CD8-positive, alpha-beta T cell (primary cell): ENCODE measurements at regions of chr2 and their contacts with region 1.

Region 1: DNA sequence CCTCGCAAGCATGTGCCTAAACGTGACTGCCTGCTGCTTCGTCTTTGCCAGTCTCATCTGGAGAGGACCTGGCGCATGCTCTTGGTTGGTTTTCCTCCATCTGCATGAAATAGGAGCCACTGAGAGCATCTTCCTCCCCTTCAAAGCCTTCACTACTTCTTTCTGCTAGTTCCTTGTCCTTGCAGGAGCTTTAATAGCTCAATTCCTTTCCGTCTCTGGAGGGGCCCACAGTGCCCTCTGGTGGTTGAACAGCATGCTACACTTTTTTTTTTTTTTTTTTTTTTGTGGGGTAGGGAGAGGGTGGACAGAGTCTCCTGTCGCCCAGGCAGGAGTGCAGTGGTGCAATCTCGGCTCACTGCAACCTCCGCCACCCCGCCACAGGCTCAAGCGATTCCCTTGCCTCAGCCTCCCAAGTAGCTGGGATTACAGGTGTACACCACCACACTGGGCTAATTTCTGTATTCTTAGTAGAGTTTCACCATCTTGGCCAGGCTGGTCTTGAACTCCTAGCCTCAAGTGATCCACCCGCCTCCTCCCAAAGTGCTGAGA is 59.6 kb downstream of the SP110 start:
- DNase-seq: peak in 8 of 9 experiments; percentile 27 to 68 (median 55)
- ATAC-seq: peak; percentile 61
- H3K4me3 ChIP-seq: no peak overlapping the region
- H3K4me3 Mint-ChIP-seq: no peak overlapping the region
- H3K27ac ChIP-seq: no peak overlapping the region
- H3K27ac Mint-ChIP-seq: no peak overlapping the region
- H3K4me1 ChIP-seq: no peaks in the 10 kb centered on the region
- H3K4me1 Mint-ChIP-seq: peaks cover 2% of the 10 kb centered on the region
- H3K27me3 ChIP-seq: no peaks in the 10 kb centered on the region
- H3K27me3 Mint-ChIP-seq: no peaks in the 10 kb centered on the region
- CTCF ChIP-seq: peak; percentile 88

Region 2: DNA sequence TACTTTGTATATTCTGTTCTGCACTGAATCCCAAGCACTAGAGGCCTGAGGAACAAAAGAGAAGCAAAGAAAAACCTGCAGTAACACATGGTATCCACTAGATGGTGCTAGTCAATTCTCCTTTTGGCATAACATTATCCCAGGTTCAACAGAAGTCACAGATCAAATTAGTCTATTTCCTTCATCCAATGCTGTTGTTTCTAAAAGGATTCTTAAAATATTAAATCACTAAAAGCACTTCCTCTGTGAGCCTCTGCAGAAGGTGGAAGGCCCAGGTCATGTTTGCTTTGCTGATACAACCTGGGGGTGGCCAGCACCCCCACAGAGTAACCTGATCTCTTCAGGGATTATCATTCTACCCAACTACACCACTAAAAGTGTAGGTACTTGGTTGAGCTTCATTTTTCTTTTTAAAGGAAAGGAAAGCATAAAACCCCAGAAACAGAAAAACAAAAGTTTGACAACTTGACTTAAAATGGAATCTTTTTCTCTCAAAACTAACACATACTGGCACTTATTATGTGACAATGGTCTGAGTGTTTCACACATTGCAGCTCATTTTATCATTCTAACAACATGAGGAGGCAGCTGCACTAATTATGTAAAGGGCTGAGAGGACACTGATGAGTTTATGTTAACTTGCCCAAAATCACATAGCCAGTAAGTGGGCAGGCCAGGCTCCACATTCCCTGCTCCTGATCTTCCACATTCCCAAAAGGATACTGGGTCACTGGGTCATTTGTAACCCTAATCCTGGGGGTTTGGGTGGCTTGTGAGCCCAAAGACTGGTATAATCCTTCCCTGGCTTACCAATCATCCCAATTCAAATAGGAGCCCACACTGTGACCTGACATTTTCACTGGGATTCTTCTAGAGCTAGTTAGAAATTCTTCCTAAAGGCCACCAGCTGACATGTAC is 379.1 kb before region 1 on chr2:
- CTCF ChIA-PET with region 1: interaction called, 5 read pairs
- POLR2A ChIA-PET with region 1: no interaction called
- intact Hi-C with region 1: loop called (anchors 2 kb)
- DNase-seq: peak in 2 of 9 experiments; percentile 41 to 61
- ATAC-seq: peak; percentile 84
- H3K4me3 ChIP-seq: no peak overlapping the region
- H3K4me3 Mint-ChIP-seq: no peak overlapping the region
- H3K27ac ChIP-seq: no peak overlapping the region
- H3K27ac Mint-ChIP-seq: peak overlapping the region; percentile 28
- H3K4me1 ChIP-seq: peaks cover 4% of the 10 kb centered on the region
- H3K4me1 Mint-ChIP-seq: peaks cover 27% of the 10 kb centered on the region
- H3K27me3 ChIP-seq: no peaks in the 10 kb centered on the region
- H3K27me3 Mint-ChIP-seq: no peaks in the 10 kb centered on the region
- CTCF ChIP-seq: peak; percentile 98

Region 3: GRCh38 chr2:230007931-230008707 is 152.1 kb before region 1 on chr2:
- CTCF ChIA-PET with region 1: interaction called, 12 read pairs
- POLR2A ChIA-PET with region 1: no interaction called
- intact Hi-C with region 1: loop called in 1 of 2 experiments (anchors 1 kb)
- DNase-seq: peak; percentile 56 to 87 (median 73)
- ATAC-seq: peak; percentile 48
- H3K4me3 ChIP-seq: no peak overlapping the region
- H3K4me3 Mint-ChIP-seq: no peak overlapping the region
- H3K27ac ChIP-seq: no peak overlapping the region
- H3K27ac Mint-ChIP-seq: no peak overlapping the region
- H3K4me1 ChIP-seq: no peaks in the 10 kb centered on the region
- H3K4me1 Mint-ChIP-seq: peaks cover 3% of the 10 kb centered on the region
- H3K27me3 ChIP-seq: no peaks in the 10 kb centered on the region
- H3K27me3 Mint-ChIP-seq: no peaks in the 10 kb centered on the region
- CTCF ChIP-seq: peak; percentile 83

Region 4: DNA sequence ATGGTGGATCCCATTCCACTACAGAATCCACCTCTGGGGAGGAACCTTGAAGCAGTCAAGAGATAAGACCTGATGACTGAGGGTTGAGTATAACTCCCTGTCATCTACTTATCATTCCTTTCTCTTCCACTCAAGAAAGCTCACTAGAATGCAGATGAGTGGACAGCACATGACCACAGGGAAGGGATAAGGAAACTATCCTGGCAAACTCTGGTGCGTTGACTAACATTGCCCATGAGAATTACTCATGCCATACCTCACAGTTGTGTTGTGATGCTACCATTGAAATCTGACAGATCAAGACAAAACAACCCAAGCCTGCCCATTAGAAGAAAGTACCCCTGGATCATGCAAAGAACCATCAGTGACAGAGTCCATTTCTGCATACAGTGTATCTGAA is 118.0 kb before region 1 on chr2:
- CTCF ChIA-PET with region 1: no interaction called
- POLR2A ChIA-PET with region 1: no interaction called
- intact Hi-C with region 1: no loop called
- DNase-seq: no peak
- ATAC-seq: no peak
- H3K4me3 ChIP-seq: no peak overlapping the region
- H3K4me3 Mint-ChIP-seq: no peak overlapping the region
- H3K27ac ChIP-seq: no peak overlapping the region
- H3K27ac Mint-ChIP-seq: no peak overlapping the region
- H3K4me1 ChIP-seq: no peaks in the 10 kb centered on the region
- H3K4me1 Mint-ChIP-seq: no peaks in the 10 kb centered on the region
- H3K27me3 ChIP-seq: no peaks in the 10 kb centered on the region
- H3K27me3 Mint-ChIP-seq: no peaks in the 10 kb centered on the region
- CTCF ChIP-seq: no peak

Region 5: DNA sequence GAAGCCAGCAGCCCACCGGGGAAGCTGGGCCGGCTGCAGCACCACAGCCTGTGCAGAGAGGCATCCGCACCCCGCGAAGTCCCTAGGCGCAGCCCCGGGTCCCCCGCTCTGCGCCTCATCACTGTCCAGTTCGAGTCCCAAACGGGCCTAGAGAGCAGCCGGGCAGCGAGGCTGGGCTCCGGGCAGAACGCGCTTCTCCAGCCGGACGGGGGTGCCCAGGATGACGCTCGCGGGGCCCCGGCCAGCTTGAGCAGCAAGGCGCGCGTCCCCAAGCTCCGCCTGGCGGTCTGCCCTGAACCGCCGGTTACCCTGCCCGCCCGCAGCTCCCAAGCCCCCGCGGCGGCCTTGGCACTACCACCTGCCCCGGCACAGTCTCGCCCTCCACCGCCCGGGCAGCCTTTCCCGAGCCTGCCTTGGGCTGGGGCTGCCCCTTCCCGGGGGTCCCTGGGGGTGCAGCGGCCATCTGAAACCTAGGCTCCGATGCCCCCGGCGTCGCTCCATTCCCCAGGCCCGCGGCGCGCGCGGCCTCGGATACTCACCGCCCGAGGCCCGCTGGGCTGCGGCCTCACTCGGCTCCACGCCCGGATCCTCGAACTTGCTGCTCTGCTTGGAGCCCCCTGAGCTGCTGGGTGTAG is 92.1 kb before region 1 on chr2:
- CTCF ChIA-PET with region 1: interaction called, 3 read pairs
- POLR2A ChIA-PET with region 1: no interaction called
- intact Hi-C with region 1: loop called (anchors 1 kb)
- DNase-seq: peak; percentile 7 to 69 (median 39)
- ATAC-seq: peak; percentile 24
- H3K4me3 ChIP-seq: peak overlapping the region; percentile 50 to 63
- H3K4me3 Mint-ChIP-seq: peak overlapping the region; percentile 80
- H3K27ac ChIP-seq: no peak overlapping the region
- H3K27ac Mint-ChIP-seq: no peak overlapping the region
- H3K4me1 ChIP-seq: no peaks in the 10 kb centered on the region
- H3K4me1 Mint-ChIP-seq: peaks cover 15% of the 10 kb centered on the region
- H3K27me3 ChIP-seq: no peaks in the 10 kb centered on the region
- H3K27me3 Mint-ChIP-seq: peaks cover 27% of the 10 kb centered on the region
- CTCF ChIP-seq: peak; percentile 8

Region 6: DNA sequence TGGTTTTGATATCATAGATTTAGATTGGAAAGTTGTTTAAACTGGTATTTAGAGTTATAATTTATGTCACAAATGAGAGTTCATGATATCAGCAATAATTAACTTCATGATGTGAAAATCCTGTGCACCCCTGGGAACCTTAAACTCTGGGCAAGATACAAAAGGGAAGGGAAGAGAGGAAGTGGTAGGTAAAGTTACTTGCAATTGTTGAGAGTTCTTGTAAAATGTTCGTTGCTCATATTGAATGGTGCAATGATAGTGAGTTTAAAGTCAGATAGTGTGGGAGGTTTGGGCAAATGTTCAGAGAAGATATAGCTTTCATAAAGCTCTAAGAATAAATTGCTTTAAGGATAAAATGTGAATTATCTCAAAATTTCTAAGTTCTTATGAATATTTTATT is 15.8 kb before region 1 on chr2:
- CTCF ChIA-PET with region 1: interaction called, 10 read pairs
- POLR2A ChIA-PET with region 1: no interaction called
- intact Hi-C with region 1: no loop called
- DNase-seq: no peak
- ATAC-seq: no peak
- H3K4me3 ChIP-seq: no peak overlapping the region
- H3K4me3 Mint-ChIP-seq: no peak overlapping the region
- H3K27ac ChIP-seq: no peak overlapping the region
- H3K27ac Mint-ChIP-seq: no peak overlapping the region
- H3K4me1 ChIP-seq: no peaks in the 10 kb centered on the region
- H3K4me1 Mint-ChIP-seq: no peaks in the 10 kb centered on the region
- H3K27me3 ChIP-seq: no peaks in the 10 kb centered on the region
- H3K27me3 Mint-ChIP-seq: no peaks in the 10 kb centered on the region
- CTCF ChIP-seq: no peak

Region 7: GRCh38 chr2:230170532-230170931 is 10.3 kb after region 1 on chr2:
- CTCF ChIA-PET with region 1: interaction called, 14 read pairs
- POLR2A ChIA-PET with region 1: interaction called, 3 read pairs
- intact Hi-C with region 1: no loop called
- DNase-seq: peak in 2 of 9 experiments; percentile 26 to 47
- ATAC-seq: peak; percentile 54
- H3K4me3 ChIP-seq: no peak overlapping the region
- H3K4me3 Mint-ChIP-seq: peak overlapping the region; percentile 42
- H3K27ac ChIP-seq: peak overlapping the region in 1 of 2 experiments; percentile 44
- H3K27ac Mint-ChIP-seq: peak overlapping the region; percentile 87
- H3K4me1 ChIP-seq: peaks cover 8% of the 10 kb centered on the region
- H3K4me1 Mint-ChIP-seq: peaks cover 11% of the 10 kb centered on the region
- H3K27me3 ChIP-seq: no peaks in the 10 kb centered on the region
- H3K27me3 Mint-ChIP-seq: no peaks in the 10 kb centered on the region
- CTCF ChIP-seq: no peak

Region 8: GRCh38 chr2:230209422-230210051 is 49.4 kb after region 1 on chr2:
- CTCF ChIA-PET with region 1: no interaction called
- POLR2A ChIA-PET with region 1: no interaction called
- intact Hi-C with region 1: no loop called
- DNase-seq: no peak
- ATAC-seq: no peak
- H3K4me3 ChIP-seq: no peak overlapping the region
- H3K4me3 Mint-ChIP-seq: no peak overlapping the region
- H3K27ac ChIP-seq: no peak overlapping the region
- H3K27ac Mint-ChIP-seq: no peak overlapping the region
- H3K4me1 ChIP-seq: no peaks in the 10 kb centered on the region
- H3K4me1 Mint-ChIP-seq: peaks cover 21% of the 10 kb centered on the region
- H3K27me3 ChIP-seq: no peaks in the 10 kb centered on the region
- H3K27me3 Mint-ChIP-seq: no peaks in the 10 kb centered on the region
- CTCF ChIP-seq: no peak

Region 9: DNA sequence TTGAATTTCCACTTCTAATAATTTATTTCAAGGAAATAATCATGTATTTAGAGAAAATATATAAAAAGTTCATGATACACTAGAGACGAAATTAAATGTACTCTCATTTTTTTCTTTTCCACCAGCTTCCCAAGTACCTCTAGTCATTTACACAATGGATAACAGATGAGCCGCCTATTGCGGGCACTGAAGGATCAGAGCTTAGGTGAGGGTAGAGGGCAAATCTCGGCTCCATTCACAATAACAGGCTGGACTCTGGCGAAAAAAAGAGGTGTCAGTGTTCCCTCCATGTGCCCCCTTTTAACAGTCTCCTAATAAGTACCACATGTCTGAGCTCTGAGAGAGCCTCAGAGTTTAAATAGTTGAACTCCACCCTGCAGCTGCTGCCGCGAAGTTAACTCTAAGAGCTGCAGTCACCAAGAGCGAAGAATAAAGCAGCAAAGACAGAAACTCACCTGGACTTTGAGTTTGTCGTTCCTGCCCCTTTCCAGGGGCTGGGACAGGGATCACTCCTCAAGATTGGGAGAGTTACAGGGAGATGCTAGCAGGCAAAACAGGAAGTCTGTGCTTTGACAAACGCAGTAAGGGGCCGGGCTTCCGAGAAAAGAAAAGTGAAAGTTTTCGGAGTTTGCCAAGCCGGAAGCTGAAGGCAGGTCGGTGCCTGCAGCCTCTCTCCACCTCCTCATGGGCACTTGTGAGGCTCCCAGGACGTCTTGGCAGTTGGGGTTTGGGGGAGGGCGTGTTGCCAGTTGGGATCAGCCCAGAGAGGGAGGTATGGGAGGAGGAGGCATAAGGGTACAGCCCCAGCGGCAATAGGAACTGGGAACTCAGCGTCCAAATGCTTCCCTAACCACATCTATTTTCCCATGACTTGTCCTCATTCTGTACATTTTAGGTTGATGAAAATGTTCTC is 59.5 kb after region 1 on chr2 and contains the start of gene SP110:
- CTCF ChIA-PET with region 1: no interaction called
- POLR2A ChIA-PET with region 1: no interaction called
- intact Hi-C with region 1: no loop called
- DNase-seq: peak; percentile 52 to 89 (median 78)
- ATAC-seq: peak; percentile 93
- H3K4me3 ChIP-seq: peak within 1 kb of the TSS; percentile 90 to 96
- H3K4me3 Mint-ChIP-seq: peak within 1 kb of the TSS; percentile 98
- H3K27ac ChIP-seq: peak within 1 kb of the TSS; percentile 82 to 88
- H3K27ac Mint-ChIP-seq: peak within 1 kb of the TSS; percentile 99
- H3K4me1 ChIP-seq: peaks cover 36% of the 10 kb centered on the region
- H3K4me1 Mint-ChIP-seq: peaks cover 60% of the 10 kb centered on the region
- H3K27me3 ChIP-seq: no peaks in the 10 kb centered on the region
- H3K27me3 Mint-ChIP-seq: no peaks in the 10 kb centered on the region
- CTCF ChIP-seq: no peak
- total RNA-seq, gene SP110: 50.6 to 58.1 TPM